PC-3 (cell line): ENCODE measurements at regions of chr1 and their contacts with region 1.

Region 1: GRCh38 chr1:1349256-1350012 is at the start of gene DVL1:
- DNase-seq: peak; percentile 75
- ATAC-seq: peak; percentile 5
- H3K4me3 ChIP-seq: peak within 1 kb of the TSS; percentile 91
- H3K27ac ChIP-seq: peak within 1 kb of the TSS; percentile 97
- H3K4me1 ChIP-seq: peaks cover 54% of the 10 kb centered on the region
- H3K27me3 ChIP-seq: no peaks in the 10 kb centered on the region
- CTCF ChIP-seq: peak; percentile 60
- total RNA-seq, gene DVL1: 626 and 813 TPM in 2 replicates

Region 2: DNA sequence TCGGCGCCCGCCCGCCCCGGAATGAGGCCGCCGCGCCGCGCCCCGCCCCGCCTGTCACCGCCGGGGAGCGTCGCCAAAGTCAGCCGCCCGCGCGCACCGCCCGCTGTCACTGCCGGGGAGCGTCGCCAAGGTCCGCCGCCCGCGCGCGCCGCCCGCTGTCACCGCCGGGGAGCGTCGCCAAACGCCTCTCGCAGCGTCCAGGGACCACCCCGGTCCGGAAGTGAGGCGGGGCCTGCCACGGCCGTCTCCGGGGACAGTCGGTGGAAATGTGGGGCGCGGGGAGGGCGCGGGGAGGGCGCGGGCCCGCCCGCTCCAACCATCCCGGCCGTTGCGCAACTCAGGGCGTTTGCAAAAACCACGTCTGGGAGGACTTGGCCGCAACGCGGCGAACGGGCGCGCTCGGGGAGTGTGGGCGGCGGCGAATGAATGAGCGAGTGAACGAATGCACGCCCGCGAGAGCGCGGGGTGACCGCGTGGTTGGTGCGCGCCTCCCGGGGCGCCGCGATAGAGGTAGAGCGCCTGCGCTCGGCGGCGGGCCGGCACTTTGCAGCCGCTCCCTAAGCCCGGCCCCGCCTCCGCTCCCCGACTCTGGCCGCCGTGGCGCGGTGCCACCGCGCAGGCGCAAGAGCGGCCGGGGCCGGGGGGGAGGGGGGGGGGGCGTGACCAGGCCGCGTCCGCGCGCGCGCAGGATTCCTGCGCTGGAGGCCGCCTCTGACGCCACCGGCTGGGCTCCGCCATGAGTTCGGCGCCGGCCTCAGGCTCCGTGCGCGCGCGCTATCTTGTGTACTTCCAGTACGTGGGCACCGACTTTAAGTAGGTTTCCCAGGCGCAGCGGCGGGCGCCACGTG is 41.3 kb before region 1 on chr1 and contains the starts of genes ACAP3 and PUSL1:
- CTCF ChIA-PET with region 1: interaction called, 3 read pairs
- POLR2A ChIA-PET with region 1: no interaction called
- intact Hi-C with region 1: loop called (anchors 2 kb)
- DNase-seq: peak; percentile 97
- ATAC-seq: peak; percentile 40
- H3K4me3 ChIP-seq: peak within 1 kb of the TSS; percentile 97
- H3K27ac ChIP-seq: peak within 1 kb of the TSS; percentile 78
- H3K4me1 ChIP-seq: peaks cover 33% of the 10 kb centered on the region
- H3K27me3 ChIP-seq: no peaks in the 10 kb centered on the region
- CTCF ChIP-seq: 0 out of 2 replicates have a peak, but pooled peaks have one; percentile 10
- total RNA-seq, gene ACAP3: 116 and 178 TPM in 2 replicates
- total RNA-seq, gene PUSL1: 132 and 142 TPM in 2 replicates

Region 3: GRCh38 chr1:1318131-1318652 is 31.2 kb before region 1 on chr1:
- CTCF ChIA-PET with region 1: no interaction called
- POLR2A ChIA-PET with region 1: no interaction called
- intact Hi-C with region 1: loop called (anchors 1 kb)
- DNase-seq: peak; percentile 99
- ATAC-seq: peak; percentile 92
- H3K4me3 ChIP-seq: no peak overlapping the region
- H3K27ac ChIP-seq: peak overlapping the region; percentile 60
- H3K4me1 ChIP-seq: peaks cover 35% of the 10 kb centered on the region
- H3K27me3 ChIP-seq: no peaks in the 10 kb centered on the region
- CTCF ChIP-seq: no peak

Region 4: GRCh38 chr1:1331068-1331965 is 18.1 kb before region 1 on chr1 and contains the start of gene TAS1R3:
- CTCF ChIA-PET with region 1: no interaction called
- POLR2A ChIA-PET with region 1: no interaction called
- intact Hi-C with region 1: loop called (anchors 2 kb)
- DNase-seq: peak; percentile 86
- ATAC-seq: peak; percentile 39
- H3K4me3 ChIP-seq: no peak within 1 kb of the TSS
- H3K27ac ChIP-seq: peak within 1 kb of the TSS; percentile 68
- H3K4me1 ChIP-seq: peaks cover 39% of the 10 kb centered on the region
- H3K27me3 ChIP-seq: no peaks in the 10 kb centered on the region
- CTCF ChIP-seq: no peak
- total RNA-seq, gene TAS1R3: 1.9 and 4.3 TPM in 2 replicates

Region 5: GRCh38 chr1:1360506-1361169 is 11.2 kb after region 1 on chr1:
- CTCF ChIA-PET with region 1: interaction called, 4 read pairs
- POLR2A ChIA-PET with region 1: no interaction called
- intact Hi-C with region 1: loop called (anchors 2 kb)
- DNase-seq: peak; percentile 97
- ATAC-seq: peak; percentile 80
- H3K4me3 ChIP-seq: no peak overlapping the region
- H3K27ac ChIP-seq: peak overlapping the region; percentile 30
- H3K4me1 ChIP-seq: peaks cover 29% of the 10 kb centered on the region
- H3K27me3 ChIP-seq: no peaks in the 10 kb centered on the region
- CTCF ChIP-seq: no peak

Region 6: GRCh38 chr1:1374929-1375662 is 25.7 kb after region 1 on chr1 and contains the start of gene AURKAIP1:
- CTCF ChIA-PET with region 1: no interaction called
- POLR2A ChIA-PET with region 1: interaction called, 4 read pairs
- intact Hi-C with region 1: loop called (anchors 2 kb)
- DNase-seq: peak; percentile 100
- ATAC-seq: peak; percentile 92
- H3K4me3 ChIP-seq: peak within 1 kb of the TSS; percentile 96
- H3K27ac ChIP-seq: peak within 1 kb of the TSS; percentile 77
- H3K4me1 ChIP-seq: peaks cover 20% of the 10 kb centered on the region
- H3K27me3 ChIP-seq: no peaks in the 10 kb centered on the region
- CTCF ChIP-seq: 0 out of 2 replicates have a peak, but pooled peaks have one; percentile 28
- total RNA-seq, gene AURKAIP1: 823 and 1,067 TPM in 2 replicates